Activated CD8-positive, alpha-beta memory T cell treated with anti-CD3 and anti-CD28 coated beads, Interleukin-2, amount 10 ng/mL, durations not matched to agents 7 days and 5 days (primary cell): ENCODE measurements at regions of chr17 and their contacts with region 1.

Region 1: DNA sequence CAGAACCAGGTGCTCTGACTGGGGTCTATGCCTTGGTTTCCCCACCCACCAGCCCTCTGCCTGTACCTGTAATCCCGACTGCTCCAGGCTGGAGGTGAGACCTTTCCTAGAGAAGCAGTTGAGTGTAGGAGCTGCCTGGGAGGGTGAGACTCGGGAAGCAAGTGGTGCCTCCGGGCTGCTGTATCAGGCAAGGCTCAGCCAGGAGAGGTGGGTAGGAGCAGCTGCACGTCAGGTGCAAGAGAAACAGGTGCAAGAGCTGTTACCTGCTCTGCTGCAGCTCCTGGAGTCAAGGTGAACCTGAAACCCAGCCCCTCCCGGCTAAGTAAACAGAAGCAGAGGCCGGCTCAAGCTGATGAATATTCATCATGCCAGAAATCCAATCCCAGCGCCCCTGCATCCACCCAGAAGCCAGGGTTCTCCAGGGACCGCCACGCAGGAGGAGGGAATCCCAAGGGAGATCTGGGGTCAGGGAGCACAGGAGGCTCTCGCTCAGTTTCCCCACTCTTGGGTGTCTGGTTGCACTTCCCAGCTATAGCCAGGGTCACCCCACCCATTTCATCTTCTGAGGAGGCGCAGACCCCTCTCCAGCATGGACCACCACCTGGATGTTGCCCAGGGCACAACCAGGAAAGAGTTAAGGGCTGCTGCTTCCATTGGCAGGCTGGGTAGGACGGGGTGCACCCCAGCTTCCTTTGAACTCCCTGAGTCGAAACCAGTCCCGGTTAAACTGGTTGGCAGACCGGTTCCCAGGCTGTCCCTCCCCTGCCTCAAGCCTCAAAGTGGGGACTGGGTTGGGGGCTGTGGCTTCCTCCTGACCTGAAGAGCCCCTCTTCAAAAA is at the start of gene PRR15L:
- DNase-seq: no peak
- ATAC-seq: no peak
- H3K4me3 Mint-ChIP-seq: no peak within 1 kb of the TSS
- H3K27ac Mint-ChIP-seq: no peak within 1 kb of the TSS
- H3K4me1 Mint-ChIP-seq: no peaks in the 10 kb centered on the region
- H3K27me3 Mint-ChIP-seq: no peaks in the 10 kb centered on the region
- total RNA-seq, gene PRR15L: not detected

Region 2: DNA sequence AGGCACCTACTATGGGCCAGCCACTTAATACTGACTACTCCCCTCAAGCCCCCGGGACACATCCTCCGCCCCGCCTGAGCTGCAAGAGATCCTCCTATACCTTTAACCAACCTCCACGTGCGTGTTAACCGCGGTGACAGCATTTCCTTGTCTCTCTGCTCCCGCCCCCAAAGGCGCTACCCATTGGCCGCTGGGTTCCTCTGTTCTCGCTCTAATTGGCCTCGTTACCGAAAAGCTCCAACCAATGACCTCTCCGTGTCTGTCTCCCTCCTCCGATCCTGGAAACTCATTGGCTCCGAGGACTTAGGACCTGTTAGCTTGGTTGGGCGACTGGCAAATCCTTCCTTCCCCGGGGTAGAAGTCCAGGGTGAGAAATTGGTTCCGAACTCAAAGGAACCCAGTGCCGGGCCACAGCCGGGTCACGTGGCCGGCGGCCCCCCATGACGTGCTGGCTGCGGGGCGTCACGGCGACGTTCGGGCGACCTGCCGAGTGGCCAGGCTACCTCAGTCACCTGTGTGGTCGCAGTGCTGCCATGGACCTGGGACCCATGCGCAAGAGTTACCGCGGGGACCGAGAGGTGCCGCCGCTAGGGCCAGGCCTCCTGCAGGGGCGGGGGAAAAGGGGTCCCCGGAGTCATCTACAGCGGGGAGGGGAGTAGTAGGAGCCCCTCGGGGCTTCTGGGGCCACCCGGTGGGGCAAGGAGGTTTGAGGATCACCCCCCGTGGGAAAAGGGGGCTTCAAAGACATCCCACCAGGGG is 16.4 kb before region 1 on chr17 and contains the start of gene PNPO:
- CTCF ChIA-PET with region 1: interaction called, 23 read pairs
- DNase-seq: peak; percentile 99
- ATAC-seq: peak; percentile 99
- H3K4me3 Mint-ChIP-seq: peak within 1 kb of the TSS; percentile 88
- H3K27ac Mint-ChIP-seq: peak within 1 kb of the TSS; percentile 92
- H3K4me1 Mint-ChIP-seq: peaks cover 59% of the 10 kb centered on the region
- H3K27me3 Mint-ChIP-seq: no peaks in the 10 kb centered on the region
- total RNA-seq, gene PNPO: 28.0 to 30.4 TPM